ENCODE measurements at regions of chr5 and their contacts with region 1.

Region 1: GRCh38 chr5:123937230-123937629 is 425.3 kb downstream of the CSNK1G3 start:
- DNase-seq: peak; percentile 64
- H3K4me3 ChIP-seq: no peak overlapping the region
- H3K27ac ChIP-seq: no peak overlapping the region
- H3K4me1 ChIP-seq: no peaks in the 10 kb centered on the region
- H3K27me3 ChIP-seq: no peaks in the 10 kb centered on the region
- CTCF ChIP-seq: peak; percentile 54 to 73

Region 2: DNA sequence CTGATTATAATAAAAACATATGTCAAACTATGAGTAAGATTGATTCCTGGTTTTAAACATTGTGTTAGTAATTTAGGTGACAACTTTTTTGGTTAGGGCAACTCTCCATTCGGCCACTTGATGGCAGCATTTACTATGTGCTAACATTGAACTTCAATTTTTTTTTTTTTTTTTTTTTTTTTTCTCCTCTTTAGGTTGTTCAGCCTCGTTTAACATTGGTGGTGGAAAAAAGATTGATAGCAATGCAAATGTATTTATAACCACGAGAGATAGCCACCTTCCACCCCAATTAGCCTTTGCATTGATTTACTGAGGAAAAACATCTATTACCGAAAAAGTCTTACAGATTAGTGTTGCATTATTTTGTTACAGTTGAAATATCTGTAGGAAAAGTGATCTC is 266.2 kb before region 1 on chr5:
- CTCF ChIA-PET with region 1: no interaction called
- dilution Hi-C with region 1: no loop called
- in situ Hi-C with region 1: no loop called
- intact Hi-C with region 1: loop called (anchors 1 kb)
- DNase-seq: peak; percentile 23
- H3K4me3 ChIP-seq: no peak overlapping the region
- H3K27ac ChIP-seq: no peak overlapping the region
- H3K4me1 ChIP-seq: no peaks in the 10 kb centered on the region
- H3K27me3 ChIP-seq: no peaks in the 10 kb centered on the region
- CTCF ChIP-seq: peak; percentile 67 to 80

Region 3: DNA sequence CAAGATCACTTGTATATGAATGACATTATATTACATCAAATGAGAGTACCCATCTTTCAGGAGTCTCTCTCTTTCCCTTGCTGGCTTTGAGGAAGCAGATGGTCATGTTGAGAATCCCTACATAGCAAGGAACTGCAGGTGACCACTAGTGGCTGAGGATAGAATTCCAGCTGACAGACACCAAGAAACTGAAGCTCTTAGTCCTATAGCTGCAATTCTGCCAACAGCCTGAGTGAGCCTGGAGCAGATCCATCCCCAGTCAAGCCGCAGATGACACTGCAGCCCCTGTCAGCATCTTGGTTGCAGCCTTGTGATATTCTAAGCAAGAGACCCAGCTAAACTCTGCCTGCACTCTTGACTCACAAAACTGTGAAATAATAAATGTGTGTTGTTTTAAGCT is 106.2 kb after region 1 on chr5:
- CTCF ChIA-PET with region 1: no interaction called
- dilution Hi-C with region 1: no loop called
- in situ Hi-C with region 1: no loop called
- intact Hi-C with region 1: no loop called
- DNase-seq: no peak
- H3K4me3 ChIP-seq: no peak overlapping the region
- H3K27ac ChIP-seq: no peak overlapping the region
- H3K4me1 ChIP-seq: no peaks in the 10 kb centered on the region
- H3K27me3 ChIP-seq: no peaks in the 10 kb centered on the region
- CTCF ChIP-seq: peak in 1 of 2 donors; percentile 18

Region 4: DNA sequence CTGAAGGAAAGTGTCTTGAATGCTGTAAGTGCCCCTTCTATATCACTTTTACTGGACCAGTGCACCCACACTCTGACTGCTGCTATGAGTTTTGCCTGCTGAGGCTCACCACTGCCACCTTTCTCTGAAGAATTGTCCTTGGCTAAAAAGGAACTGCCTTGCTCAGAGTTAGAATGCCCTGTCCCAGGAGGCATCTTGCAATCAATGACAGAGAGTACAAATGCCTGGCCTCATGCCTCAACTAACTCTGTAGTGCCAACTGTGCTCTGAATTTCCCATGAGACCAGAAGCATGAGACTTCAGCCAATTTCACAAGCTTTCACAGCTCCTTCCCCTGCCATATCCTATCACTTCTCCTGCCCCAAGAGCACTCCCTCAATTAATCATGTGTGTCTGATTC is 239.5 kb after region 1 on chr5:
- CTCF ChIA-PET with region 1: no interaction called
- dilution Hi-C with region 1: no loop called
- in situ Hi-C with region 1: no loop called
- intact Hi-C with region 1: loop called (anchors 5 kb)
- DNase-seq: no peak
- H3K4me3 ChIP-seq: no peak overlapping the region
- H3K27ac ChIP-seq: no peak overlapping the region
- H3K4me1 ChIP-seq: no peaks in the 10 kb centered on the region
- H3K27me3 ChIP-seq: no peaks in the 10 kb centered on the region
- CTCF ChIP-seq: peak in 1 of 2 donors; percentile 31

Region 5: DNA sequence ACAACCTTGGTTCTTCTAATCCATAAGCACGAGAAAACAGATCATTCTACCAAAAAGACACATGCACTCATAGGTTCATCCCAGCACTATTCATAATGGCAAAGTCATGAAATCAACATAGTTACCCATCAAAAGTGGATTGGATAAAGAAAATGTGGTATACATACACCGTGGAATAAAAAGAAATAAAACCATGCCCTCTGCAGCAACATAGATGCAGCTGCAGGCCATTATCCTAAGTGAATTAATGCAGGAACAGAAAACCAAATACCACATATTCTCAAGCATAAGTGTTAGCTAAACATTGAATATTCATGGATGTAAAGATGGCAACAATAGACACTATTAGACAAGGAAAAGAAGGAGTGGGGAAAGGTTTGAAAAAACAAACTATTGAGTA is 1825.7 kb after region 1 on chr5:
- CTCF ChIA-PET with region 1: no interaction called
- dilution Hi-C with region 1: no loop called
- in situ Hi-C with region 1: no loop called
- intact Hi-C with region 1: loop called (anchors 5 kb)
- DNase-seq: no peak
- H3K4me3 ChIP-seq: no peak overlapping the region
- H3K27ac ChIP-seq: no peak overlapping the region
- H3K4me1 ChIP-seq: no peaks in the 10 kb centered on the region
- H3K27me3 ChIP-seq: no peaks in the 10 kb centered on the region
- CTCF ChIP-seq: peak in 1 of 2 donors; percentile 23

Measured in mammary epithelial cell (primary cell).